K562 (cell line): ENCODE measurements at regions of chr2 and their contacts with region 1.

Region 1: DNA sequence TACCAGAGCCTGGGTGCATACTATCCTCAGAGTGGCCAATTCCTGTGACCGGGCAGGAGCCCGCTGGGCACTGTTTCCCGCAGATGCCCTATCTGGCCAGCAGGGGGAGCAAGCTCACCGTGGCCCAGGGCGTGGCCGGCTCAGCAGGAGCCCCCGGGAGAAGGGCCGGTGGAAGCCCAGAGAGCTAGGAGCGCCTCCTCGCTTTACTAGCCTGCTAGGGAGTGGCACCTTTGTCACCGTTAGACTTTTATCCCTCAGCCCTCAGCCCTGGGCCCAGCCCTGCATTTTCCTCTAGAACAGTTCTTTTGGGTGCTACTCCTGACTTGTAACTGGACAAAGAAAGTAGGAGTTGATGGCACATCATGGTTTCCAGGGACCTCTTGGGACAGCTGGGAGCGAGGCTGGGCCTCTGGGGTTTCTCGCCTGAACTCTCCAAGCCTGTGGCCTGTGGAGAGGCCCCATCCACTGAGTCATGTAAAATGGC is 24.0 kb downstream of the TMEM177 start:
- DNase-seq: peak; percentile 78 to 84 (median 81)
- ATAC-seq: peak; percentile 97
- H3K4me3 ChIP-seq: no peak overlapping the region
- H3K27ac ChIP-seq: no peak overlapping the region
- H3K4me1 ChIP-seq: peaks cover 0 to 4% of the 10 kb centered on the region in 2 experiments; a peak in 3 of 5 replicates
- H3K27me3 ChIP-seq: peaks cover 0 to 4% of the 10 kb centered on the region in 2 experiments; a peak in 2 of 5 replicates
- CTCF ChIP-seq: peak; percentile 89 to 97 (median 92)
- EP300 ChIP-seq: no peak
- POLR2A ChIP-seq: no peak
- RAD21 ChIP-seq: peak; percentile 80 to 94

Region 2: DNA sequence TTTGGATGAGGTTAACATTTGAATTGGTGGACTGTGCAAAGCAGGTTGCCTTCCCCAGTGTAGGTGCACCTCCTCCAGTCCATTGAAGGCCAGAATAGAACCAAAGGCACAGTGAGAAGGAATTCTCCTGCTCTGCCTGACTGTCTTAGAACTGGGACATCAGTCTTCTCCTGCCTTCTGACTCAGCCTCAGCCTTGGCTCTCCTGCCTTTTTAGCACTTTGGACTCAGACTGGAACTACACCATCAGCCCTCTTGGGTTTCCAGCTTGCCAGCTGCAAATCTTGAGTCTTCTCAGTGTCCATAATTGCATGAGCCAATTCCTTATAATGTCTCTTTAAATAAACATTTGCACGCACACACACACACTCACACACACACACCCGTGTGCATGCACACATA is 31.9 kb before region 1 on chr2:
- CTCF ChIA-PET with region 1: no interaction called
- POLR2A ChIA-PET with region 1: no interaction called
- in situ Hi-C with region 1: no loop called
- intact Hi-C with region 1: no loop called
- DNase-seq: no peak
- ATAC-seq: no peak
- H3K4me3 ChIP-seq: no peak overlapping the region
- H3K27ac ChIP-seq: no peak overlapping the region
- H3K4me1 ChIP-seq: no peaks in the 10 kb centered on the region
- H3K27me3 ChIP-seq: peaks cover 18 to 24% of the 10 kb centered on the region in 2 experiments; a peak in 4 of 5 replicates
- CTCF ChIP-seq: no peak
- EP300 ChIP-seq: no peak
- POLR2A ChIP-seq: no peak
- RAD21 ChIP-seq: no peak

Region 3: GRCh38 chr2:119721462-119721861 is 18.5 kb after region 1 on chr2:
- CTCF ChIA-PET with region 1: no interaction called
- POLR2A ChIA-PET with region 1: no interaction called
- in situ Hi-C with region 1: no loop called
- intact Hi-C with region 1: no loop called
- DNase-seq: peak in 1 of 4 experiments; percentile 34
- ATAC-seq: no peak
- H3K4me3 ChIP-seq: no peak overlapping the region
- H3K27ac ChIP-seq: no peak overlapping the region
- H3K4me1 ChIP-seq: no peaks in the 10 kb centered on the region
- H3K27me3 ChIP-seq: peaks cover 38 to 47% of the 10 kb centered on the region in 2 experiments; a peak in 4 of 5 replicates
- CTCF ChIP-seq: no peak; a peak in 1 of 6 replicates
- EP300 ChIP-seq: no peak
- POLR2A ChIP-seq: no peak
- RAD21 ChIP-seq: no peak

Region 4: DNA sequence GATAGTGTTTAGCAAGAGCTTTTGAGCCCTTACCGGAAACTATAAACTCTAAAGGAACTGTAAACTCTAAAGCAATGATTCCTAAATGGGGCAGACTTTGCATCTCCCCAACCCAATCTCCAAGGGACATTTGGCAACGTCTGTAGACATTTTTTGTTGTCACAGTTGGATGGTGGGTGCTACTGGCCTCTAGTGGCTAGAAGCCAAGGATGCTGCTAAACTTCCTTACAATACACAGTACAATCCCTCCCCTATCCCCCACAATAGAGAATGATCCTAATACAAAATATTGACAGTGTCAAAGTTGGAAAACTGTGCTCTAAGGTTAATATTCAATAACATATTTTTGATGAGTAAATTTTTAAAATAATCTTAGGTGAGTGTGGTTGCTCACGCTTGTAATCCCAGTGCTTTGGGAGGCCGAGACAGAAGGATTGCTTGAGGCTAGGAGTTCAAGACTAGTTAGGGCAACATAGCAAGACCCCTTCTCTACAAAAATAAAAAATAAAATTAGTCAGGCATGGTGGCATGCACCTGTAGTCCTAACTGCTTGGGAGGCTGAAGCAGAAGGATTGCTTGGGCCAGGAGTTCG is 123.5 kb after region 1 on chr2:
- CTCF ChIA-PET with region 1: interaction called, 4 read pairs
- POLR2A ChIA-PET with region 1: interaction called, 3 read pairs
- in situ Hi-C with region 1: no loop called
- intact Hi-C with region 1: loop called (anchors 1 kb)
- DNase-seq: peak; percentile 12 to 58 (median 28)
- ATAC-seq: peak; percentile 95
- H3K4me3 ChIP-seq: no peak overlapping the region
- H3K27ac ChIP-seq: no peak overlapping the region
- H3K4me1 ChIP-seq: 0 out of 5 replicates have a peak, but pooled peaks cover 0 to 3% of the 10 kb centered on the region in 2 experiments
- H3K27me3 ChIP-seq: no peaks in the 10 kb centered on the region
- CTCF ChIP-seq: peak; percentile 63 to 76 (median 68)
- EP300 ChIP-seq: no peak
- POLR2A ChIP-seq: no peak
- RAD21 ChIP-seq: peak; percentile 48 to 69

Region 5: GRCh38 chr2:120012771-120013596 is 310.0 kb after region 1 on chr2 and contains the start of gene EPB41L5:
- CTCF ChIA-PET with region 1: no interaction called
- POLR2A ChIA-PET with region 1: no interaction called
- in situ Hi-C with region 1: no loop called
- intact Hi-C with region 1: loop called (anchors 2 kb)
- DNase-seq: peak; percentile 82 to 95 (median 88)
- ATAC-seq: peak; percentile 92
- H3K4me3 ChIP-seq: peak within 1 kb of the TSS; percentile 84
- H3K27ac ChIP-seq: peak within 1 kb of the TSS; percentile 71
- H3K4me1 ChIP-seq: peaks cover 2 to 15% of the 10 kb centered on the region in 2 experiments; a peak in 3 of 5 replicates
- H3K27me3 ChIP-seq: no peaks in the 10 kb centered on the region
- CTCF ChIP-seq: no peak
- EP300 ChIP-seq: no peak
- POLR2A ChIP-seq: peak; percentile 65
- RAD21 ChIP-seq: no peak
- polyA plus RNA-seq, gene EPB41L5: 2.3 to 3.0 TPM